A549 (cell line): ENCODE measurements at regions of chr20 and their contacts with region 1.

Region 1: GRCh38 chr20:10673988-10674711 is at the start of gene JAG1:
- DNase-seq: peak; percentile 97 to 99
- ATAC-seq: peak; percentile 73 to 76
- H3K4me3 ChIP-seq: peak within 1 kb of the TSS; percentile 92
- H3K27ac ChIP-seq: peak within 1 kb of the TSS; percentile 95 to 97
- H3K4me1 ChIP-seq: peaks cover 33% of the 10 kb centered on the region
- CTCF ChIP-seq: no peak
- EP300 ChIP-seq: peak in 1 of 2 experiments; percentile 10; a peak in 2 of 5 replicates
- POLR2A ChIP-seq: peak; percentile 42; the same call in 1 of the 2 replicates
- RAD21 ChIP-seq: peak in 1 of 2 experiments; percentile 14; a peak in 1 of 5 replicates
- polyA plus RNA-seq, gene JAG1: 90.0 and 141 TPM in 2 replicates

Region 2: GRCh38 chr20:10542442-10542841 is 131.7 kb before region 1 on chr20:
- CTCF ChIA-PET with region 1: no interaction called
- POLR2A ChIA-PET with region 1: no interaction called
- DNase-seq: no peak
- ATAC-seq: no peak
- H3K4me3 ChIP-seq: no peak overlapping the region
- H3K27ac ChIP-seq: peak overlapping the region; percentile 84 to 92
- H3K4me1 ChIP-seq: peaks cover 67% of the 10 kb centered on the region
- CTCF ChIP-seq: no peak
- EP300 ChIP-seq: no peak
- POLR2A ChIP-seq: no peak
- RAD21 ChIP-seq: no peak

Region 3: GRCh38 chr20:10553326-10553984 is 120.7 kb before region 1 on chr20:
- CTCF ChIA-PET with region 1: interaction called, 25 read pairs
- POLR2A ChIA-PET with region 1: interaction called, 9 read pairs
- DNase-seq: peak; percentile 54 to 85
- ATAC-seq: peak; percentile 70 to 84; a peak in 5 of 6 replicates
- H3K4me3 ChIP-seq: no peak overlapping the region
- H3K27ac ChIP-seq: peak overlapping the region; percentile 37 to 46; a peak in 4 of 6 replicates
- H3K4me1 ChIP-seq: peaks cover 55% of the 10 kb centered on the region
- CTCF ChIP-seq: peak; percentile 97
- EP300 ChIP-seq: no peak
- POLR2A ChIP-seq: no peak
- RAD21 ChIP-seq: peak; percentile 98 to 99

Region 4: DNA sequence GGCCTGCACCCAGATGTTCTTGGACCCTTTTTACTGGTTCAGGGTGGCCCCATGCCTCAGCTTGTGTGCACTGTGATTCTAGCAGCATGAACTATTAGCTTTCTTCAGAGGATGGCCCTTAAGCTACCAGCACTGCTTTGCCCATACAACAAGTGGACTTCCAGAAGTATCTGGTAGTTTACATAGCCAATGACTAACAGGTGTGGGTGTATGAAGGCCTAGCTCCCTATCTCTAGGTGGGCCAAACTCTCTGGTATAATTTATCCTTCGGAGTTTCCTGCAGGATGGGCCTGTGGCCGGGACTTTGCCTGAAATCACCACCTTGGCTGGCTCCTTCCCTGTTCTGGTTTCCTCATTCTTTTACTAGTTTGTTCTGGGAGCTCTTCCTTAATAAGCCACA is 25.8 kb after region 1 on chr20:
- CTCF ChIA-PET with region 1: interaction called, 14 read pairs
- POLR2A ChIA-PET with region 1: interaction called, 8 read pairs
- DNase-seq: no peak
- ATAC-seq: no peak
- H3K4me3 ChIP-seq: no peak overlapping the region
- H3K27ac ChIP-seq: peak overlapping the region in 1 of 2 experiments; percentile 31; a peak in 2 of 6 replicates
- H3K4me1 ChIP-seq: no peaks in the 10 kb centered on the region
- CTCF ChIP-seq: no peak
- EP300 ChIP-seq: no peak
- POLR2A ChIP-seq: no peak
- RAD21 ChIP-seq: no peak

Region 5: DNA sequence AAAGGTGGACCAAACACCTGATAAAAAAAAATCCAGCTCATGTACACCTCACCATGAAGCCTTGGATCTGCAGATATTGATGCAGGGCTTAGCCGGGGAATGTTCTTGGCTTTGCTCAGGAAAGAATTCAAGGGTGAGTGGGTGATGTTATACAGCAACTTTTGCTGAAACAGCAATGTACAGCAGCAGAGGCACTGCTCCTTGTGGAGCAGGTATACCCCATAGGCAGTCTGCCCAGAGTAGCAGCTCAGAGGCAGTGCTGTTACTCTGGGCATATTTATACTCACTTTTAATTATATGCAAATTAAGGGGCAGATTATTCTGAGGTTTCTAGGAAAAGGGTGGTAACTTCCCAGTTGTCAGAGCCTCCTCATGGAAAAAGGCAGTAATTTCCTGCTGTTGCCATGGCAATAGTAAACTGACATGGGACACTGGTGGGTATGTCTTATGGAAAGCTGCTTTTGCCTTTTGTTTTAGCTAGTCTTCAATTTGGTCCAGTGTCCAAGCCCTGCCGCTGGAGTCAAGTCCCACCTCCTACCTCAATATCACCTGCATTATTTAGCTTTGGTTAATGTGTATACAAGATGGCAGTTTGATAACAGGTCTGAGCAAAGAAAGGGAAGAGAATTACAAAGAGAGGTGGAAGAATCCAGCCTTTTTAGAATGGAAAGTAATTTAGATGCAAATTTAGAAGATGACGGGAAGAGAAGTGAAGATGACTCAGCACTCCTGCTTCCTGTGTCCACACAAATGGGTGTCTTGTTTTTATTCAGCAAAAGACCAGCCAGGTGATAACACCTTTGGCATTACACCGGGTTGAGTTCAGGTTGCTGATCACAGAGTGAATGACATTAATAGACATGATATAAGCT is 109.8 kb after region 1 on chr20:
- CTCF ChIA-PET with region 1: interaction called, 11 read pairs
- POLR2A ChIA-PET with region 1: no interaction called
- DNase-seq: no peak
- ATAC-seq: no peak; a peak in 1 of 6 replicates
- H3K4me3 ChIP-seq: no peak overlapping the region
- H3K27ac ChIP-seq: peak overlapping the region; percentile 11 to 39; a peak in 3 of 6 replicates
- H3K4me1 ChIP-seq: peaks cover 11% of the 10 kb centered on the region; the same call in 2 of the 3 replicates
- CTCF ChIP-seq: no peak
- EP300 ChIP-seq: no peak
- POLR2A ChIP-seq: no peak
- RAD21 ChIP-seq: no peak

Region 6: DNA sequence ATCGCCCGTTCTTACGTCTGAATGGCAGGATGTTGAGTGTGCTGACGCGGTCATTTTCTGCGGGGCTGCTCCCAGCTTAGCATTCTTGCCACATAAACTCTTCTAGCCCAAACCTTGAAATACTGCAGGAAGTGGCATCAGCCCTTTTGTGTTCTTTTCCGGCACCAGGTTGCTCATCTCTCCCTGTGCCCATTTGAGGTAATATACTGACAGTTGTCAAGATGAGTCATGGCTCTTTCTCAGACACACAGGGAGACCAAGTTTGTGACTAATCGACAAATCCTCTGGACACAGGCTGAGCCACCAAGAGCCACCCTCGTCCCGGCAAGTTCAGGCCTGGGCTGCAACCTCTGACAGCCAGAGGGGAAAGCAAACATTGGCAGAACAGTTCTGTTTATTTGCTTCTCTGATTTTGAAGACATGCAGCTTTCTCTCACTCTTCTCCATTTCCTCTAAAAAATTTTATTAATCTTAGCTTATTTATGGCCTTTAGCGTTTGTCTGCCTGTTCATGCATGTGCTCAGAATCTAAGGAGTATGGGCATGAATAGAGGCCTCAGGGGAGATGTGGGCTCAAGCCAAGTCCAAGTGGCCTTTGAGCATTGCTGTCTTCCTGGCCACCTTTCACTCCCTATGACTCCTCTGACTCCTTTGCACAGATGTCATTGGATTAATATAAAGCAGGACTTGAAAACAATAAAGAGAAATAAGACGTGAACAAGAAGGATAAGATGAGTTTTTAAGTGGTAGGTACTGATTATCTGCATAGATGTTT is 327.8 kb after region 1 on chr20:
- CTCF ChIA-PET with region 1: interaction called, 7 read pairs
- POLR2A ChIA-PET with region 1: interaction called, 10 read pairs
- DNase-seq: peak; percentile 91 to 98
- ATAC-seq: peak; percentile 97 to 98
- H3K4me3 ChIP-seq: no peak overlapping the region
- H3K27ac ChIP-seq: peak overlapping the region; percentile 84 to 85
- H3K4me1 ChIP-seq: peaks cover 29% of the 10 kb centered on the region
- CTCF ChIP-seq: no peak
- EP300 ChIP-seq: peak; percentile 93; a peak in 4 of 5 replicates
- POLR2A ChIP-seq: no peak
- RAD21 ChIP-seq: peak; percentile 53 to 73; a peak in 4 of 5 replicates

Region 7: GRCh38 chr20:11242320-11242719 is 568.2 kb after region 1 on chr20:
- CTCF ChIA-PET with region 1: interaction called, 10 read pairs
- POLR2A ChIA-PET with region 1: no interaction called
- DNase-seq: no peak
- ATAC-seq: no peak
- H3K4me3 ChIP-seq: no peak overlapping the region
- H3K27ac ChIP-seq: no peak overlapping the region
- H3K4me1 ChIP-seq: no peaks in the 10 kb centered on the region
- CTCF ChIP-seq: no peak
- EP300 ChIP-seq: no peak
- POLR2A ChIP-seq: no peak
- RAD21 ChIP-seq: no peak

Region 8: DNA sequence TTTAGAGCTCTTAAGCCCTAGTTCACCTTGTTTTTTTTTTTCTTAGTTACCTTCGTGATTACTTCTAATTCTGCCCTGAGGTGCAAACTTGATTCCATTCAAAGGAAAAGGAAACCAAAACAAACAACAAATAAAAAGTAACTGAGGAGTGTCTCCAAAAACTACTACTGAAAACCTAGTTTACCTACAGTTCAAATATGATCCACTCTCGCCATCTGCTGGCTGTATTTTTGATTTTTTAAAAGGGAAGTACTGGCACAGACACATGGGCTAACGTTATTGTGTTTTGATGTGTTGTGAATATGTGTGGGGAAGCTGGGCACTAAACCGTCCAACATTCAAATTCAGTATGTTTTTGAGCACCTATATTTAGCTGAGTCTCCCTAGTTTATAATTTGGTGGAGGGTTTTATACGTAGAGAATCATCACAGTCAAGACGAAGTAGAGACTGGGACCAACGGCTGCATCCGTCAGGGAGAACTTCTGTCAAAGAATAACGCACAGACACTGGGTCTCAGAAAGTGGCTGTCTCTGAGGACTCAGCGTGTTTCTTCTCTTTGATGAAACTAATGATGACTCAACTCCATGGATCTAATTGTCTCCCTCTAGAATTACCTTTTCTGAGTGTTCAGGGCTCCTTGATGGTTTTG is 870.0 kb after region 1 on chr20:
- CTCF ChIA-PET with region 1: interaction called, 20 read pairs
- POLR2A ChIA-PET with region 1: interaction called, 5 read pairs
- DNase-seq: peak; percentile 55 to 84
- ATAC-seq: peak; percentile 85 to 93
- H3K4me3 ChIP-seq: no peak overlapping the region
- H3K27ac ChIP-seq: peak overlapping the region; percentile 75 to 83
- H3K4me1 ChIP-seq: peaks cover 22% of the 10 kb centered on the region
- CTCF ChIP-seq: peak; percentile 95
- EP300 ChIP-seq: no peak
- POLR2A ChIP-seq: no peak
- RAD21 ChIP-seq: peak; percentile 98